ENCODE measurements at regions of chrX and their contacts with region 1.

Region 1: DNA sequence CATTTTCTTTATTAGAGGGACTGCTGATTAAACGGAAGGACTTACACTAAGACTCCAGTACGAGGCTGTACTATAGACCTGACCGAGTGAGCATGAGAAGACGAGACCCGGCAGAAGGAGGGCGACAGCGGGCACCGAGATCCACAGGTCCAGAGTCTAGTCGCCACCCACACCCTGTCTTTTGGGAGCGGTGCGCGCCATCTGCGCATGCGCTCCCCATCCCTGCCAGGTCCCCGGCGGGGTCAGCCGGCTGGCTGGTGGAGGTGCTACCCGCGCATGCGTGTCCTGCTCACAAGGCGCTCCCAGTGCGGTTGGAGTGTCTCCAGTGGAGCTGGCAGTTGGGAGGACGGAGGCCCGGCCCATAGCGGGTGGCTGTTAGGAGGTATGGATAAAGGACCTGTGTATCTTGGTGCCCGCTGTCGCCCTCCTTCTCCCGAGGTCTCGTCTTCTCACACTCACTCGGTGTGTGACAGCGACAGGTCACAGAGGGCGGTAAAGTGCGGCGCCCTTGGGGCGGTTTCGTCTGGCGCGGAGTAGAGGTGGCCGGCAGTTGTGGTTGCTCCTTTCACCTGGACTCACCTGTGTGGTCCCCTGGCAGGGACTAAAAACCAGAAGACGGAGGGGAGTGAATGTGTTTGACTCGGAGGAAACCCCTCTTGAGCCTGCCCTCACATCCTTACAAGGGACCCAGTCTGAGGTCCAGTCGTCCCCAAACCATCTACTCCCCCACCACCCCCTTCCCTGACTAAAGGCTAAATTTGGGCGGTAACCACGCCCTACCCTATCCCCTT is 7.6 kb upstream of the HSD17B10 start:
- DNase-seq: peak; percentile 66 to 87
- ATAC-seq: peak; percentile 64 to 76
- H3K4me3 ChIP-seq: peak overlapping the region; percentile 44 to 57 (median 55)
- H3K27ac ChIP-seq: peak overlapping the region; percentile 83 to 94 (median 90)
- H3K4me1 ChIP-seq: no peaks in the 10 kb centered on the region
- H3K27me3 ChIP-seq: peaks cover 0 to 12% (median 4%) of the 10 kb centered on the region in 3 donors
- CTCF ChIP-seq: no peak
- POLR2A ChIP-seq: peak; percentile 66 to 72

Region 2: GRCh38 chrX:53093748-53094583 is 347.8 kb before region 1 on chrX and contains the start of gene KANTR:
- in situ Hi-C with region 1: no loop called
- intact Hi-C with region 1: loop called (anchors 5 kb)
- DNase-seq: peak; percentile 82 to 91
- ATAC-seq: peak; percentile 94 to 96
- H3K4me3 ChIP-seq: peak within 1 kb of the TSS; percentile 63 to 76 (median 68)
- H3K27ac ChIP-seq: peak within 1 kb of the TSS; percentile 85 to 95 (median 92)
- H3K4me1 ChIP-seq: peaks cover 6 to 7% of the 10 kb centered on the region in 2 donors
- H3K27me3 ChIP-seq: no peaks in the 10 kb centered on the region
- CTCF ChIP-seq: no peak
- POLR2A ChIP-seq: peak; percentile 75 to 83
- total RNA-seq, gene KANTR: 3.0 to 13.0 (median 7.4) TPM

Region 3: DNA sequence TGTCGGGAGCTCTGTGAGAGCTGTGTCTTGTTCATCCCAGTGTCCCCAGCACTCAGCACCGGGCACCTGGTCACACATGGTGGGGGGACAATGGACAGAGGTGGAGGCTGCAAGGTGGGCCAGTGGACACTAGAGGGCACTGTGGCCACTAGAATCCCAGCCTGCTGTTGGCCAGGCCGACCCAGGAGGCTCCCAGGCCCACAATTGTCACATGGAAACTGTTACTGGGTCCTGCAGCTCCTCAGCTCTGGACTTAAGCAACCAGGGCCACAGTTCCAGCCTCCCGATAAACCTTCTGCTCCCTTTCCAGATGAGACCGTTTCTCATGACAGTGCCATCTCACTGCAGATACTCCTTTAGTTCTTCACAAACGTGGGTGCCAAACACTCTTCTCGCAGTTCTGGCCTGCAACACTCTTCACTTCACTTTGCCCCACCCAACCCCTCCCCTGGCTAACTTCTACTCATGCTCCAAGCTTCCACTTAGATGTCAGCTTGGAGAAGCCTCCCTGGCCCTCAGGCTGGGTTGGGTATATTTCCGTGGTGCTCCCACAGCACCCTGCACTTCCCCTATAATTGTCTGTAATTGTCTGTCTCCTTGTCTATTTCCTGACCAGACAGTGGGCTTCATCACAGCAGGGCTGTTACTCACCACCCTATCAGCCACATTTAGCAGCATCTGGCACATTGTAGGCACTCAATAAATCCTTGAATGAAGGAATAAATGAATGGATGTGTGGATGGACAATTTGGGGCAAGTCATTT is 156.9 kb before region 1 on chrX:
- in situ Hi-C with region 1: no loop called
- intact Hi-C with region 1: loop called (anchors 5 kb)
- DNase-seq: peak; percentile 44 to 72
- ATAC-seq: peak; percentile 16 to 17
- H3K4me3 ChIP-seq: no peak overlapping the region
- H3K27ac ChIP-seq: peak overlapping the region; percentile 12 to 93 (median 88)
- H3K4me1 ChIP-seq: peaks cover 64 to 68% of the 10 kb centered on the region in 2 donors
- H3K27me3 ChIP-seq: no peaks in the 10 kb centered on the region
- CTCF ChIP-seq: peak; percentile 57 to 89 (median 84)
- POLR2A ChIP-seq: no peak

Region 4: GRCh38 chrX:53422086-53422860 is 19.5 kb before region 1 on chrX and contains the start of gene SMC1A:
- in situ Hi-C with region 1: no loop called
- intact Hi-C with region 1: loop called (anchors 1 kb)
- DNase-seq: peak; percentile 90 to 94
- ATAC-seq: peak; percentile 95 to 96
- H3K4me3 ChIP-seq: peak within 1 kb of the TSS; percentile 65 to 89 (median 81)
- H3K27ac ChIP-seq: peak within 1 kb of the TSS; percentile 91 to 96 (median 94)
- H3K4me1 ChIP-seq: peaks cover 11 to 29% of the 10 kb centered on the region in 2 donors
- H3K27me3 ChIP-seq: no peaks in the 10 kb centered on the region
- CTCF ChIP-seq: peak in 1 of 5 experiments; percentile 10
- POLR2A ChIP-seq: peak; percentile 60 to 73
- total RNA-seq, gene SMC1A: 12.9 to 23.5 (median 17.1) TPM

Region 5: GRCh38 chrX:53544940-53545339 is 103.2 kb after region 1 on chrX:
- in situ Hi-C with region 1: no loop called
- intact Hi-C with region 1: no loop called
- DNase-seq: no peak
- ATAC-seq: no peak
- H3K4me3 ChIP-seq: no peak overlapping the region
- H3K27ac ChIP-seq: no peak overlapping the region
- H3K4me1 ChIP-seq: no peaks in the 10 kb centered on the region
- H3K27me3 ChIP-seq: no peaks in the 10 kb centered on the region
- CTCF ChIP-seq: no peak
- POLR2A ChIP-seq: no peak

Region 6: GRCh38 chrX:53683556-53684414 is 242.1 kb after region 1 on chrX:
- in situ Hi-C with region 1: no loop called
- intact Hi-C with region 1: loop called (anchors 5 kb)
- DNase-seq: peak; percentile 91 to 95
- ATAC-seq: peak; percentile 84 to 86
- H3K4me3 ChIP-seq: peak overlapping the region; percentile 58 to 86 (median 60)
- H3K27ac ChIP-seq: peak overlapping the region; percentile 83 to 95 (median 90)
- H3K4me1 ChIP-seq: peaks cover 2 to 26% of the 10 kb centered on the region in 2 donors
- H3K27me3 ChIP-seq: no peaks in the 10 kb centered on the region
- CTCF ChIP-seq: no peak
- POLR2A ChIP-seq: peak; percentile 74 to 79

Measured in gastrocnemius medialis (tissue), 4 donors.